ENCODE measurements at regions of chr2 and their contacts with region 1.

Region 1: DNA sequence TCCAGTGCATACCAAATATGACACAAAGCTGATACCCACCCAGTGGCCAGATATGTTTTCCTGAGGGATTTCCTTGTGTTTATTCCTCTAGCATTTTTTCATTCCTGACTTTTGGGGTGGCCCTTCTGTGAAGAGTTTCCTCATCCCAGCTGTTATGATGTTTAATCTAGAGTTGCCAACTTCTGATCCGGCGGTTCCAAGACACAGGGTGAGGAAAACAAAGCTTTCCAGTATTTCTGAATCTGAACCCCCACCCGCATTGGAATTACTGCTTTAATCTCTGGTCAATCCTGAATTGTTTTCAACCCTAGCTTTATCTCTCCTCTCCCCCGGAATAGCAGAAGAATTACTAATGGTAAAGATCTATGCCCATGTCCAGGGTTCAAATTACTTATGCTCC is 39.2 kb upstream of the PNPT1 start:
- DNase-seq: no peak
- ATAC-seq: peak in 1 of 4 donors; percentile 20
- H3K4me3 ChIP-seq: no peak overlapping the region
- H3K27ac ChIP-seq: peak overlapping the region in 5 of 12 donors; percentile 1 to 61 (median 19)
- H3K4me1 ChIP-seq: peaks cover 0 to 19% (median 0%) of the 10 kb centered on the region in 12 donors
- H3K27me3 ChIP-seq: no peaks in the 10 kb centered on the region
- CTCF ChIP-seq: no peak
- POLR2A ChIP-seq: no peak

Region 2: GRCh38 chr2:55530539-55531081 is 202.2 kb before region 1 on chr2:
- intact Hi-C with region 1: no loop called
- DNase-seq: no peak
- ATAC-seq: peak in 3 of 4 donors; percentile 51 to 62 (median 53)
- H3K4me3 ChIP-seq: no peak overlapping the region
- H3K27ac ChIP-seq: peak overlapping the region in 10 of 12 donors; percentile 7 to 66 (median 45)
- H3K4me1 ChIP-seq: peaks cover 0 to 5% (median 0%) of the 10 kb centered on the region in 12 donors
- H3K27me3 ChIP-seq: no peaks in the 10 kb centered on the region
- CTCF ChIP-seq: no peak
- POLR2A ChIP-seq: no peak

Region 3: GRCh38 chr2:55705027-55705653 is 27.7 kb before region 1 on chr2:
- intact Hi-C with region 1: loop called in 1 of 10 experiments (anchors 2 kb)
- DNase-seq: no peak
- ATAC-seq: no peak
- H3K4me3 ChIP-seq: no peak overlapping the region
- H3K27ac ChIP-seq: no peak overlapping the region
- H3K4me1 ChIP-seq: no peaks in the 10 kb centered on the region
- H3K27me3 ChIP-seq: peaks cover 0 to 7% (median 0%) of the 10 kb centered on the region in 9 donors
- CTCF ChIP-seq: no peak
- POLR2A ChIP-seq: no peak

Measured in heart left ventricle (tissue), 16 donors.